Vagina (tissue), 2 donors: ENCODE measurements at regions of chr10 and their contacts with region 1.

Region 1: DNA sequence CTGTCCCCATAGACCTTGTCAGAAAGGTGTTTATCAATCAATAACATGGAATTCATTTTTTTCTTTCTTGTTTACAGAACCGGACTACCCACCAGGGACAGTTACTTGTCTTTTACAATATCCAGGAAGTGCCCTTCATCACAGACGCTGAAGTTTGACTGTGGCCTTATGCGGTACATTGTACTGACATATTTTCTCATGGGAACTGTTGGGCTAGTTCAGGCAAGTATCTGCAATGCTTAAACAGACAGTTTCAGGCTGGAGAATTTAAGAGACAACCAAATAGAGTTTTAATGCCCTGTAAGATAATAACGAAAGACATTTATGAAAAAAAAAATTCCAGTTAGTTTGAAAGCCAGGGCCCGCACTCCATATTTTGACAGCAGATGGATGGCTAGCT is 246.4 kb downstream of the GATA3 start:
- DNase-seq: no peak
- H3K4me3 ChIP-seq: no peak overlapping the region
- H3K27ac ChIP-seq: no peak overlapping the region
- H3K4me1 ChIP-seq: no peaks in the 10 kb centered on the region
- H3K27me3 ChIP-seq: no peaks in the 10 kb centered on the region
- CTCF ChIP-seq: no peak
- POLR2A ChIP-seq: no peak

Region 2: GRCh38 chr10:8044908-8045725 is 255.8 kb before region 1 on chr10:
- intact Hi-C with region 1: no loop called
- DNase-seq: peak in 1 of 2 donors; percentile 70
- H3K4me3 ChIP-seq: peak overlapping the region; percentile 9 to 28
- H3K27ac ChIP-seq: no peak overlapping the region
- H3K4me1 ChIP-seq: peaks cover 38% of the 10 kb centered on the region
- H3K27me3 ChIP-seq: peaks cover 23% of the 10 kb centered on the region
- CTCF ChIP-seq: no peak
- POLR2A ChIP-seq: no peak

Region 3: GRCh38 chr10:8095959-8096358 is 205.0 kb before region 1 on chr10:
- intact Hi-C with region 1: no loop called
- DNase-seq: no peak
- H3K4me3 ChIP-seq: no peak overlapping the region
- H3K27ac ChIP-seq: no peak overlapping the region
- H3K4me1 ChIP-seq: no peaks in the 10 kb centered on the region
- H3K27me3 ChIP-seq: no peaks in the 10 kb centered on the region
- CTCF ChIP-seq: no peak
- POLR2A ChIP-seq: no peak

Region 4: GRCh38 chr10:8254350-8254749 is 46.6 kb before region 1 on chr10:
- intact Hi-C with region 1: loop called (anchors 1 kb)
- DNase-seq: no peak
- H3K4me3 ChIP-seq: no peak overlapping the region
- H3K27ac ChIP-seq: no peak overlapping the region
- H3K4me1 ChIP-seq: no peaks in the 10 kb centered on the region
- H3K27me3 ChIP-seq: no peaks in the 10 kb centered on the region
- CTCF ChIP-seq: no peak
- POLR2A ChIP-seq: no peak